MCF 10A (cell line): ENCODE measurements at regions of chr11 and their contacts with region 1.

Region 1: GRCh38 chr11:27698872-27699474 is 1.3 kb downstream of the BDNF start:
- DNase-seq: peak; percentile 89
- H3K4me3 Mint-ChIP-seq: peak overlapping the region; percentile 97
- H3K27ac Mint-ChIP-seq: no peak overlapping the region
- H3K4me1 Mint-ChIP-seq: peaks cover 11% of the 10 kb centered on the region
- H3K27me3 Mint-ChIP-seq: no peaks in the 10 kb centered on the region
- CTCF ChIP-seq: peak; percentile 84

Region 2: GRCh38 chr11:27720277-27720830 is 21.4 kb after region 1 on chr11:
- CTCF ChIA-PET with region 1: interaction called, 90 read pairs
- POLR2A ChIA-PET with region 1: interaction called, 68 read pairs
- intact Hi-C with region 1: no loop called
- DNase-seq: peak; percentile 53
- H3K4me3 Mint-ChIP-seq: peak overlapping the region; percentile 81
- H3K27ac Mint-ChIP-seq: no peak overlapping the region
- H3K4me1 Mint-ChIP-seq: peaks cover 14% of the 10 kb centered on the region
- H3K27me3 Mint-ChIP-seq: peaks cover 28% of the 10 kb centered on the region
- CTCF ChIP-seq: no peak

Region 3: DNA sequence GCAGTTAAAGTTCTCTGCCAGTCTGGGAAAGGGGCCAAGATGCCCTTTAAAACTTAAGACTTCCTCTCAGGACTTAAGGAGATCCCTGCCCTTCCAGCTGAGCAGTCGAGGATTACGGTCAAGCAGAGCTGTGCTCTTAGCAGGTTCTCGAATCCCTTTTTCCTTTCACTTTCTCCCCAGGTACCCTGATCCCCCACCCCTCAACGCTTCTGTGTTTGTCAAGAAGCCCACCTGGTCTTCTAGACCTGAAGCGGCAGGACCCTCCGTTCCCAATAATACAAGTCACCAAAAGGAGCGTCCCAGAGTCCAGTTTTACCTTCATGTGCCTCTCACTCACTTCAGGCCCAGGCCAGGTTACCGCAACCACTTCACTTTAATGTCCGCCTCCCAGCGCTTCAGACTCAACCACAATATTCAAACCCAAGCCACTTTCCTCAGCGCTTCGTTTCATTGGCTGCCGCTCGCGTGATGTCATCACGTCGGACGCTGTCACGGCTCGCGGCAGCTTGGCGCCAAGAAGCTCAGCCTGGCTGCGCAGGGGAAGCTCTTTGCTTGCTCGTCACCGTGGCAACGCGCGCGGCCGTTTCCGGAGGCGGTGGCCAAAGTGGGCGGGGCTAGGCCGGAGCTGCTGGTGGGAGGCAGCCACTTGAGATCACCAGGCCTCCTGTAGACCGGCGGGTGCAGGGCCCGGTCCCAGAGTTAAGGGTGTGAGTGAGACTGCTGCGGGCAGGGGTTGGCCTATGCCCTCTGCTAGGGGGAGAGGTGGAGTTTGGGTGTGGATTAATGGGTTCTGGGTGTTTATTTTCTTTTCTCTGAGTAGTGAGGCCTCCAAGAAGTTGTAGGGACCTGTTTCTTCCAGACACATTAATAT is 409.0 kb after region 1 on chr11 and contains the starts of genes KIF18A and METTL15:
- CTCF ChIA-PET with region 1: interaction called, 10 read pairs
- POLR2A ChIA-PET with region 1: interaction called, 51 read pairs
- intact Hi-C with region 1: loop called (anchors 2 kb)
- DNase-seq: peak; percentile 98
- H3K4me3 Mint-ChIP-seq: peak within 1 kb of the TSS; percentile 98
- H3K27ac Mint-ChIP-seq: peak within 1 kb of the TSS; percentile 100
- H3K4me1 Mint-ChIP-seq: peaks cover 48% of the 10 kb centered on the region
- H3K27me3 Mint-ChIP-seq: no peaks in the 10 kb centered on the region
- CTCF ChIP-seq: no peak
- total RNA-seq, gene KIF18A: 8.9 and 12.9 TPM in 2 replicates
- total RNA-seq, gene METTL15: 16.8 and 19.9 TPM in 2 replicates

Region 4: GRCh38 chr11:29019960-29020683 is 1321.1 kb after region 1 on chr11:
- CTCF ChIA-PET with region 1: interaction called, 7 read pairs
- POLR2A ChIA-PET with region 1: no interaction called
- intact Hi-C with region 1: loop called (anchors 5 kb)
- DNase-seq: peak; percentile 52
- H3K4me3 Mint-ChIP-seq: no peak overlapping the region
- H3K27ac Mint-ChIP-seq: no peak overlapping the region
- H3K4me1 Mint-ChIP-seq: peaks cover 11% of the 10 kb centered on the region
- H3K27me3 Mint-ChIP-seq: no peaks in the 10 kb centered on the region
- CTCF ChIP-seq: peak; percentile 18

Region 5: DNA sequence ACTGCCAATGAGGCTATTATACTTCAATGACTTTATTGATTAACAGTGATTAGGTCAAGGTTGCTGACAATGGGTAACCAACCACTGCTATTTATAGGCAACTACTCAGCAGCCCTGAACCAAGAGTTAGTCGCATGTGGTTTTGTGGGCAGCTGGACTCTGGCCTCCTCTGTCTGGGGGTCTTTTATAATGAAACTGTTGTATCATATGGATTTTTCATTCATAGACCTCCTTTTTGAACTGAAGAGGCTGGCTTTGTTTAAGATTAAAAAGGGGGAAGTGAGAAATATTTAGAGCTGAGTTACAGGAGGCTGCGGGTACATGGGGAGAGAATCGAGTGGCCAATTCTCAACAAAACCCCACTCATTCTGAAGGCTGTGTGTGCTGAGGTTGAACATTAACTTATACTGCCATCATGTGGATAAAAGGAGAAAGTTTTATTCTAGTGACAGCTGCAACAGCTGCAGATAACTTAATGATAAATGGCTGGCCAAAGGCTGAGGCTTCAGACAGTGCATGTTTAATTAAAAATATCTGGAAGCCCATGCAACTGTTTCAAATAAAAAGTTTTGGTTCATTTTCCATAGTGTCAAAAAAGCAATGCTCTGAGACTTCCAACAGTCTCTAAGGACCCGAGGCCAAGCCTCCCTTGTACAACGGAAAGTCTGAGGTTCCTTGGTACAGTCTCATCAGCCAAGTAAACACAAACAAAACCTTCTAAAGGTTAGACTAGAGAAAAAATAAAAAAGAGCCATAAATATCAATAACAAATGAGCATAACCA is 1635.2 kb after region 1 on chr11:
- CTCF ChIA-PET with region 1: interaction called, 56 read pairs
- POLR2A ChIA-PET with region 1: interaction called, 6 read pairs
- intact Hi-C with region 1: loop called (anchors 1 kb)
- DNase-seq: peak; percentile 56
- H3K4me3 Mint-ChIP-seq: no peak overlapping the region
- H3K27ac Mint-ChIP-seq: no peak overlapping the region
- H3K4me1 Mint-ChIP-seq: peaks cover 3% of the 10 kb centered on the region
- H3K27me3 Mint-ChIP-seq: no peaks in the 10 kb centered on the region
- CTCF ChIP-seq: peak; percentile 50